ENCODE measurements at regions of chr17 and their contacts with region 1.

Region 1: DNA sequence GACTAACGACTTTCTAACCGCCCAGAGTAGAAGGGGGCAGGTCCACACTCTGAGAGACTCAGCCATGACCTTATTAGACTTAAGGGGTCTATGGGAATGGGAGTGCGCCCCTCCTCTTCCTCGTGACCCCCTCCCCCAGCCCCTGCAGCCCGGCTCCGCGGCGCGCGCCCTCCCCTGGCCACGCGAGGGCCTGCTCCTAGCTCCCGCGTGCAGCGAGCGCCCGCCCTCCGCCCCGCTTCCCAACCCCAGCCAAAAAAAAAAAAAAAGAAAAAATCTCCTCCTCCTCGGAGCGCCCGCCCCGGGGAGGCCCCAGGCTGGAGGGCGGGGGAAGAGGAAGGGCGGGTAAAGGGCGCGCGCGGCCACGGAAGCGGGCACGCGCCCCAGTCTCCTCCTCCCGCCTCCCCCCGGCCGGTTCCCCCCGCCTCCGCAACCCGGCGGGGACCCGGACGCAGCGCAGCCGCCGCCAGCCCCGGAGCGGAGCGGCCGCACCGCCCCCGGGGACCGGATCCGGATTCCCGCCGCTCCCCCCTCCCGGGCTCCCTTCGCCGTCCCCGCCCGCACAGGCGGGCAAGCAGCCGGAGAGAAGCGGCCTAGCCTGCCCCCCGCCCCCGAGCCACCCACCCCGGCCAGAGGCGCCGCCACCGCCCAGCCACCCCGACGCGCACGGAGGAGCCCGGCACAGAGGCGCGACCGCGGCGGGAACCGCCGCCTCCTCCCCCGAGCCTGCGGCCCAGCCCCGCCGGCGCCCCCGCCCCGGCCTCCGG is 949 bp downstream of the UBTF start:
- DNase-seq: peak; percentile 84 to 87
- ATAC-seq: peak; percentile 45 to 59
- H3K4me3 ChIP-seq: peak overlapping the region; percentile 51 to 93 (median 63)
- H3K27ac ChIP-seq: peak overlapping the region; percentile 95 to 100 (median 98)
- H3K4me1 ChIP-seq: peaks cover 46 to 55% of the 10 kb centered on the region in 2 donors
- H3K27me3 ChIP-seq: no peaks in the 10 kb centered on the region
- CTCF ChIP-seq: peak; percentile 35 to 72 (median 62)
- POLR2A ChIP-seq: peak; percentile 70 to 81

Region 2: GRCh38 chr17:44186307-44187130 is 32.0 kb before region 1 on chr17 and contains the start of gene TMUB2:
- in situ Hi-C with region 1: no loop called
- intact Hi-C with region 1: loop called (anchors 1 kb)
- DNase-seq: peak; percentile 98 to 99
- ATAC-seq: peak; percentile 93 to 97
- H3K4me3 ChIP-seq: peak within 1 kb of the TSS; percentile 88 to 99 (median 90)
- H3K27ac ChIP-seq: peak within 1 kb of the TSS; percentile 93 to 99 (median 96)
- H3K4me1 ChIP-seq: peaks cover 27 to 40% of the 10 kb centered on the region in 2 donors
- H3K27me3 ChIP-seq: no peaks in the 10 kb centered on the region
- CTCF ChIP-seq: no peak
- POLR2A ChIP-seq: peak; percentile 74 to 77
- total RNA-seq, gene TMUB2: 25.6 to 34.7 (median 27.4) TPM